Natural killer cell (primary cell): ENCODE measurements at regions of chr19 and their contacts with region 1.

Region 1: GRCh38 chr19:36014029-36014924 is at the start of gene ALKBH6:
- DNase-seq: peak; percentile 99
- ATAC-seq: peak; percentile 97 to 100 (median 97)
- H3K4me3 ChIP-seq: peak within 1 kb of the TSS; percentile 85
- H3K4me3 Mint-ChIP-seq: peak within 1 kb of the TSS; percentile 98
- H3K27ac ChIP-seq: peak within 1 kb of the TSS; percentile 89
- H3K27ac Mint-ChIP-seq: peak within 1 kb of the TSS; percentile 95 to 99
- H3K4me1 ChIP-seq: peaks cover 23% of the 10 kb centered on the region
- H3K4me1 Mint-ChIP-seq: peaks cover 35 to 46% of the 10 kb centered on the region in 2 donors
- H3K27me3 ChIP-seq: no peaks in the 10 kb centered on the region
- H3K27me3 Mint-ChIP-seq: no peaks in the 10 kb centered on the region
- CTCF ChIP-seq: no peak
- total RNA-seq, gene ALKBH6: 39.0 to 57.3 (median 48.1) TPM

Region 2: DNA sequence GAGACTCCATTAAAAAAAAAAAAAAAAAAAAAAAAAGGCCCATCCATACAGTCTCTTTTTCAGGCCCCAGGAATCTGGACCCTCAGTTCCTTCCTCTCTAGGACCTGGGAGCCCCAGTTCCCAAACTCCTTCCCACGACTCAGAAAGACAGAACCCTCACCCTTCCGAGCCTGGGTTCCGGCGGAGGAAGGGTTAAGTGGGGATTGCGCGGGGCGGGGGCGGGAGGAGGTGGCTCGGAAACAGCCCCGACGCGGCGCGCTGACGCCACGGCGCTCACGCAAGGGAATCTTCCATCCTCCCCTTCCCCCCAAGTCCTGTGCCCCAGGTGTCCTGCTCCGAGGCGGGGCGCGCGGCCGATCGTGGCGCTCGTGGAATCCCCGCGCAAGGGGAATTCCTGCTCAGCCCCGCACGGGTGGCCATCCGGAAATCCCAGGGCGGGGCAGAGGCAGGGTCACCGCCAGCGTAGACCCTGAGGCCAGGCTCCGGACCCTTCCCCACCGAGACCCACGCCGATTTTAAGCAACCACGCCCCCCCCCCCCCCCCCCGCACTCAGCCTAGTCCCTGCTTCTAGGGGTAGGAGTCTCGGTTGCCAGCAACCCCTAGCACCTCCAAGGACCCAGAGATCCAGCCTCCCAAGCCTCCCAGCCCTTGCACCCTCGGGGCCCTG is 114.6 kb before region 1 on chr19:
- intact Hi-C with region 1: no loop called
- DNase-seq: peak; percentile 84 to 97
- ATAC-seq: peak; percentile 50 to 75 (median 59)
- H3K4me3 ChIP-seq: peak overlapping the region; percentile 74
- H3K4me3 Mint-ChIP-seq: peak overlapping the region; percentile 92
- H3K27ac ChIP-seq: peak overlapping the region; percentile 97
- H3K27ac Mint-ChIP-seq: peak overlapping the region; percentile 90 to 97
- H3K4me1 ChIP-seq: peaks cover 74% of the 10 kb centered on the region
- H3K4me1 Mint-ChIP-seq: peaks cover 43 to 74% of the 10 kb centered on the region in 2 donors
- H3K27me3 ChIP-seq: no peaks in the 10 kb centered on the region
- H3K27me3 Mint-ChIP-seq: no peaks in the 10 kb centered on the region
- CTCF ChIP-seq: no peak

Region 3: DNA sequence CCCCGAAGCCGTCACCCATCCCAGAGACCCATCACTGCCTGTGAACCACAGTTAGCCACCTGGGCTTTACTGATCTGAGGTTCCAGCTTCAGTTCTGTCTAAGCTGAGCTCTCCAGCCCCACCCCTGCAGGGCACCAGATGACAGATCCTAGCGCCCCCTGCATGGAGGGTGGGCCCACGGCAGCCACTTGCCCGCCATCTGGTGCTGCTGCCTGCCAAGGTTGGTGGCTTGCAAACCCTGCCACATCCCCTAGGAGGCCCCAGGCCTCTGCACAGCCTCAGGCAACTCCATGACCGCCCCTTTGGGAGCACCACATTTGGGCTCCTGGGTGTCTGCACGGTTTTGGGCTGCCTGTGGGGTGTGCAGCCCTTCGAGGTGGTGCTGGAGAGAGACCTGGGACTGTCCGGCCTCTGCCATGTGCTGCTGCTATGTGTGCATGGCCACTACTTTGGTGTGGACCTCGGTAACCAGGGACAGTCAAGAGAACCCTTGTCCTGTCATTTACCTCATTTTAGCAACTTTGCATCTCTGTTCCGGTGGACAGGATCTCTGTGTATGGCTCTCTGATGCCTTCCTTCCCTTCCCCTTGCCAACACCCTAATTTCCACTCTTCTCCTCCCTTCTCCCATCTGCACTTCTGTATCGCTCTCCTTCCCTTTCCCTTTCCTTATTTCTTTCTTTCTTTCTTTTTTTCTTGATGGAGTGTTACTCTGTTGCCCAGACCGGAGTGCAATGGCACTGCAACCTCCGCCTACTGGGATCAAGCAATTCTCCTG is 36.6 kb before region 1 on chr19:
- intact Hi-C with region 1: no loop called
- DNase-seq: peak in 1 of 2 donors; percentile 34
- ATAC-seq: peak in 1 of 3 donors; percentile 55
- H3K4me3 ChIP-seq: no peak overlapping the region
- H3K4me3 Mint-ChIP-seq: no peak overlapping the region
- H3K27ac ChIP-seq: no peak overlapping the region
- H3K27ac Mint-ChIP-seq: no peak overlapping the region
- H3K4me1 ChIP-seq: no peaks in the 10 kb centered on the region
- H3K4me1 Mint-ChIP-seq: no peaks in the 10 kb centered on the region
- H3K27me3 ChIP-seq: no peaks in the 10 kb centered on the region
- H3K27me3 Mint-ChIP-seq: peaks cover 15 to 28% of the 10 kb centered on the region in 2 donors
- CTCF ChIP-seq: no peak

Region 4: DNA sequence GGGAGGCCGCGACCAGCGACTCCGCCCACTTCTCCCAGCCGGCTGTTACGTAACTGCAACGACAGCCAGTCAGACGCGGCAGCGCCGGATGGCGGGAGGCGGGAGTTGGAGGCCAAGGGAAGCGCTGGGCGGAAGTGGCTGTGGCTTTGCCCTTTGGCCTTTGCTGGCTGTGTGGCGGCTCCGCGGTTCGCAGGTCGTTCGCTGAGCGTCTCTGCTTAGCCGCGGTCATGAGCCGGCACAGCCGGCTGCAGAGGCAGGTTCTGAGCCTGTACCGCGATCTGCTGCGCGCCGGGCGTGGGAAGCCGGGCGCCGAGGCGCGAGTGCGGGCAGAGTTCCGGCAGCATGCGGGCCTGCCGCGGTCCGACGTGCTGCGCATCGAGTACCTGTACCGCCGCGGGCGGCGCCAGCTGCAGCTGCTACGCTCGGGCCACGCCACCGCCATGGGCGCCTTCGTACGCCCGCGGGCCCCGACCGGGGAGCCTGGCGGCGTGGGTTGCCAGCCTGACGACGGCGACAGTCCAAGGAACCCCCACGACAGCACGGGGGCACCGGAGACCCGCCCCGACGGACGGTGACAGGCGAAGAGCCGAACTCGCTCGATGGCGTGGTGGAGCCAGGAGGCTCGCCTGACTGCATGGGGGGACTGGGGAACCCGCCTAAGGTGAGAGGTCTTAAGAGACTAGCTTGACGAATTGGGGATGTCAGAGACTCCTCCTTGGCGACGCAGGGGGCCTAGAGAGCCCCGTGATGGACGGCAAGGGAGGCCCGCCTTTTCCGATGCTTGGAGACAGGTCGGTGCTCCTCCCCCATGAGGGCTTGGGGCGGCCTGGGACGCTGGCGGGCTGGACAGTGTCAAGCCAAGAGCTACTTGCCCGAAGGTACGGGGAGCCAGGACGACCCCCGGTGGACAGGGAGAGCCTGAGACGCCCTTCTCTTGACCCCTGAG is 19.0 kb before region 1 on chr19 and contains the start of gene SDHAF1:
- intact Hi-C with region 1: loop called (anchors 1 kb)
- DNase-seq: peak; percentile 88 to 95
- ATAC-seq: peak; percentile 89 to 94 (median 91)
- H3K4me3 ChIP-seq: peak within 1 kb of the TSS; percentile 59
- H3K4me3 Mint-ChIP-seq: peak within 1 kb of the TSS; percentile 96
- H3K27ac ChIP-seq: peak within 1 kb of the TSS; percentile 83
- H3K27ac Mint-ChIP-seq: peak within 1 kb of the TSS; percentile 91 to 95
- H3K4me1 ChIP-seq: peaks cover 26% of the 10 kb centered on the region
- H3K4me1 Mint-ChIP-seq: peaks cover 12 to 30% of the 10 kb centered on the region in 2 donors
- H3K27me3 ChIP-seq: no peaks in the 10 kb centered on the region
- H3K27me3 Mint-ChIP-seq: no peaks in the 10 kb centered on the region
- CTCF ChIP-seq: no peak
- total RNA-seq, gene SDHAF1: 9.2 to 12.1 (median 10.5) TPM

Region 5: GRCh38 chr19:36030264-36031148 is 16.2 kb after region 1 on chr19:
- intact Hi-C with region 1: no loop called
- DNase-seq: no peak
- ATAC-seq: no peak
- H3K4me3 ChIP-seq: no peak overlapping the region
- H3K4me3 Mint-ChIP-seq: no peak overlapping the region
- H3K27ac ChIP-seq: no peak overlapping the region
- H3K27ac Mint-ChIP-seq: no peak overlapping the region
- H3K4me1 ChIP-seq: peaks cover 11% of the 10 kb centered on the region
- H3K4me1 Mint-ChIP-seq: peaks cover 0 to 24% of the 10 kb centered on the region in 2 donors
- H3K27me3 ChIP-seq: no peaks in the 10 kb centered on the region
- H3K27me3 Mint-ChIP-seq: no peaks in the 10 kb centered on the region
- CTCF ChIP-seq: no peak